ENCODE measurements at regions of chr6 and their contacts with region 1.

Region 1: DNA sequence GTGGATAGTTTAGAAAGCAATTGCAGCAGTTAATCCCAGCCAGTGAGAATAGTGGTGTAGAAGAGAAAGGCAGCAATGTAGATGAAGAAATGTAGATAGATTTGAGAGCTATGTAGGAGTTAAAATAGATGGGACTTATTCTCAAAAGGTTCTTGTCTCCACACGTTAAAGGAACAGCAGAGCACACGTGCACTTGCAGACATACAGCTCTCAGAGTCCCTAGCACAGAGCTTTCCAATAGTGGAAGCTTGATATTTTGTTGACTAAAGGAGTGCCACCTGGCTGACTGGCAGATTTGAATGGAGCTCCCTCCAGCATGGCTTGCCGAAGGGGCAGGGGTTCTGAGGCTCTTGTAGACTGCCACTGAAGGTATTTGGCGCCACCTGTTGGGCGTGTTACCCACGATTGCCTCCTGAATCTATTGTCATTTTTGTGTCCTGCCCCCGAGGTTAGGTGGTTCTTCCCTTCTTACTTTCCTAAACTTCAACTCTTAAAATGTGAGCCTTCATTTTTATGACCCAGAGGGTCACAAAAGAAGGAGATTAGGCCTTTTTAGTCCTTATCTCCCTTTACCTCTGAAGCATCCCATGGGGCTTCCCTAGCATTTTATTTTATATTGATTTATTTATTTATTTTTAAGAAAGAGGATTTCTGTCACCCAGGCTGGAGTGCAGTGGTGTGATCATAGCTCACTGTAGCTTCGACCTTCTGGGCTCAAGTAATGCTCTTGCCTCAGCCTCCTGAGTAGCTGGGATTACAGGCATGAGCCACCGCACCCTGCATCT is 16.4 kb downstream of the BRD2 start:
- DNase-seq: peak; percentile 93
- ATAC-seq: peak; percentile 78
- H3K4me3 Mint-ChIP-seq: no peak overlapping the region
- H3K27ac Mint-ChIP-seq: peak overlapping the region; percentile 58
- H3K4me1 Mint-ChIP-seq: peaks cover 25% of the 10 kb centered on the region
- H3K27me3 Mint-ChIP-seq: peaks cover 3% of the 10 kb centered on the region

Region 2: GRCh38 chr6:32838114-32838958 is 146.5 kb before region 1 on chr6 and contains the start of gene TAP2:
- CTCF ChIA-PET with region 1: interaction called, 63 read pairs
- POLR2A ChIA-PET with region 1: interaction called, 5 read pairs
- DNase-seq: peak; percentile 98
- ATAC-seq: peak; percentile 85
- H3K4me3 Mint-ChIP-seq: peak within 1 kb of the TSS; percentile 82
- H3K27ac Mint-ChIP-seq: peak within 1 kb of the TSS; percentile 99
- H3K4me1 Mint-ChIP-seq: peaks cover 80% of the 10 kb centered on the region
- H3K27me3 Mint-ChIP-seq: no peaks in the 10 kb centered on the region
- total RNA-seq, gene TAP2: 145 to 159 TPM

Region 3: GRCh38 chr6:32868257-32868788 is 116.5 kb before region 1 on chr6:
- CTCF ChIA-PET with region 1: interaction called, 37 read pairs
- POLR2A ChIA-PET with region 1: no interaction called
- DNase-seq: peak; percentile 93
- ATAC-seq: peak; percentile 77
- H3K4me3 Mint-ChIP-seq: no peak overlapping the region
- H3K27ac Mint-ChIP-seq: no peak overlapping the region
- H3K4me1 Mint-ChIP-seq: peaks cover 35% of the 10 kb centered on the region
- H3K27me3 Mint-ChIP-seq: peaks cover 3% of the 10 kb centered on the region

Region 4: DNA sequence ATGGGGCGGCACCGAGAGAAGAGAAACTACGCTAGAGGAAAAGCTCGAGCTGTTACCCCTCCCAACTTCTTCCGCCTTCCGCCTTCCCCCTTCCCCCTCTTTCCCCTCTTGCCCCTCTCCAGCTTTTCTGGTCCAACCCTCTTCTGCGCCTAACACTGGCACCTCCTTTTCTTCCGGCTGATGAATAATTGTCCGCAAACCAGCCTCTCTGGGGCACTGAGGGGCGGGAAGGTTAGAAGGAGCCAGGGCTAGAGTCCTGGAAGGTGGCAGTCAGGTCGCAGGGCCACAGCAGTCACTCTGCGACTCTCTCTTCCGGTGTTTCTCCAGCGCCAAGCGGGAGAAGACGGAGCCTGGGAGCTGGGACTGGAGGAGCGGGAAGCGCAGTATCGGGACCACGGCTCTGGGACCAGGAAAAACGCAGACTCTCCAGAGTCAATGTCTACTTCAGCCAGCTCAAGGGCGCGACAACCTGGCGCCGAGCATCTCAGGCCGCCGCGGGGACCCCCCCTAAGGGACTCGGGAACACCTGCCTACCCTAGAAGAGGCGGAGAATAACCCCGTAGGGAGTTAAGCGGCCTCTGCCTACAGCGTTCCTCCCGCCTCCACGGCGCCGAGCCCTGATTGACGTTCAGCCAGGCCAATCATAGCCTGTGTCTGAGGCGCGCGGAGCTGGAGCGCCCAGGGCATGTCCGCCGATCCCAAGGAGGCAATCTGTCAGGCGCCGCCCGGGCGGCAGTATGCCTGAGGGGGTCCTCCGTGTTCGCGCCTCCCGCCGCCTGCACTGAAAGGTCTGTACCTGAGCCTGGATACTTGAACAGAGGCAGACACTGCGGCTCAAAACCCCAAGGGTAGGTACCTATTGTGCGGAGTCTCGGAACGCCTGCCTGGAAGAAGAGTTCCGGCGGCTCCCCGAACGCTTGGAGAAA is 90.5 kb before region 1 on chr6:
- CTCF ChIA-PET with region 1: interaction called, 133 read pairs
- POLR2A ChIA-PET with region 1: interaction called, 5 read pairs
- DNase-seq: peak; percentile 94
- ATAC-seq: peak; percentile 99
- H3K4me3 Mint-ChIP-seq: peak overlapping the region; percentile 98
- H3K27ac Mint-ChIP-seq: peak overlapping the region; percentile 94
- H3K4me1 Mint-ChIP-seq: peaks cover 37% of the 10 kb centered on the region
- H3K27me3 Mint-ChIP-seq: peaks cover 10% of the 10 kb centered on the region

Region 5: DNA sequence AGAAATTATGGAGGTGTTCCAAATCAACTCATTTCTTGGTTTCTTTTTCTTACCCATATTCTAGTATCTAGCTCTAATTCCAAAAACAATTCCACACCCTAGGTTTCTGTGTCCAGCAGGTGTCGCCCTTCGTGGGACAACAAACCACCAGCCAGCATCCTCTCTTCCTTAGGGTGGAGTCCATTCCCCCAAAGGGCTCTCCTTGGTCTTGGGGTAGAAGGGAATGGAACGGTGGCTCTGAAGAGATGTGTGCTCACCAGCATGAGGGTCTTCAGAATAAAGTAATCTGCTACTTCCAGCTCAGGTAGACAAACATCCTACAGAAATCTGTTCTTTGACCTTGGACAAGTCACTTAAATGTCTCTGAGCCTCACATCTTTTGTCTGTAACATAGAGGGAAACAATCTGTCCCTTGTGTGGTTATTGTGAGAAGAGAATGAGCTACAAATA is 51.1 kb before region 1 on chr6:
- CTCF ChIA-PET with region 1: interaction called, 205 read pairs
- POLR2A ChIA-PET with region 1: interaction called, 4 read pairs
- DNase-seq: peak; percentile 80
- ATAC-seq: peak; percentile 68
- H3K4me3 Mint-ChIP-seq: no peak overlapping the region
- H3K27ac Mint-ChIP-seq: no peak overlapping the region
- H3K4me1 Mint-ChIP-seq: peaks cover 16% of the 10 kb centered on the region
- H3K27me3 Mint-ChIP-seq: peaks cover 12% of the 10 kb centered on the region

Region 6: GRCh38 chr6:32952817-32953739 is 31.7 kb before region 1 on chr6 and contains the start of gene HLA-DMA:
- CTCF ChIA-PET with region 1: interaction called, 240 read pairs
- POLR2A ChIA-PET with region 1: no interaction called
- DNase-seq: peak; percentile 85
- ATAC-seq: peak; percentile 98
- H3K4me3 Mint-ChIP-seq: peak within 1 kb of the TSS; percentile 77
- H3K27ac Mint-ChIP-seq: peak within 1 kb of the TSS; percentile 83
- H3K4me1 Mint-ChIP-seq: peaks cover 62% of the 10 kb centered on the region
- H3K27me3 Mint-ChIP-seq: no peaks in the 10 kb centered on the region
- total RNA-seq, gene HLA-DMA: 28.6 to 30.5 TPM

Region 7: GRCh38 chr6:33235221-33235634 is 250.4 kb after region 1 on chr6:
- CTCF ChIA-PET with region 1: no interaction called
- POLR2A ChIA-PET with region 1: no interaction called
- DNase-seq: no peak
- ATAC-seq: no peak
- H3K4me3 Mint-ChIP-seq: no peak overlapping the region
- H3K27ac Mint-ChIP-seq: no peak overlapping the region
- H3K4me1 Mint-ChIP-seq: peaks cover under 1% of the 10 kb centered on the region
- H3K27me3 Mint-ChIP-seq: peaks cover 25% of the 10 kb centered on the region

Measured in activated CD8-positive, alpha-beta T cell treated with anti-CD3 and anti-CD28 coated beads, Interleukin-2, amount 10 ng/mL, durations not matched to agents 7 days and 5 days (primary cell).